ENCODE measurements at regions of chr3 and their contacts with region 1.

Region 1: GRCh38 chr3:9142362-9142761 is 107.1 kb downstream of the SRGAP3 start:
- DNase-seq: peak; percentile 32 to 50
- ATAC-seq: peak; percentile 96 to 99
- H3K4me3 ChIP-seq: no peak overlapping the region
- H3K27ac ChIP-seq: peak overlapping the region; percentile 17 to 54 (median 39)
- H3K4me1 ChIP-seq: peaks cover 22% of the 10 kb centered on the region in 2 donors
- H3K27me3 ChIP-seq: no peaks in the 10 kb centered on the region
- CTCF ChIP-seq: no peak
- POLR2A ChIP-seq: no peak

Region 2: DNA sequence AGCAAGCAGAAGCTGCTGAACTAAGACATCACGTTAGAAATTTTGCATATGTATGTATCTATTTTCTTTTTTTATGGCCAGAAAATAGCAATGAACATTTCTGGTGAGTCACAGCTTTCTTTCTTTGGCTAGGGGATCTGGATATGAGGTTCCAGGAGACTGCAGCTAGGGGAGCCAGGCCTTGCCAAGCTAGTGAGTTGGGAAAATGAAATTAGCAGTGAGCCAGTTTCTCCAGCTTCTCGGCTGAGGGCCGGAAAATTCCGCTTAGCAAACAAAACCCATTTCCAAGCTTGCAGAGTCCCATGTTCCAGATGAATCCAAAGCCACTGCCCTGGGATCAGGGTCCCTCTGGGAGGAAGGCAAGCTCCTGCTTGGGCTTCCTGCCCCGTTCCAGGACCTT is 30.5 kb before region 1 on chr3:
- in situ Hi-C with region 1: no loop called
- intact Hi-C with region 1: no loop called
- DNase-seq: peak; percentile 37 to 45
- ATAC-seq: peak; percentile 64 to 76
- H3K4me3 ChIP-seq: no peak overlapping the region
- H3K27ac ChIP-seq: no peak overlapping the region
- H3K4me1 ChIP-seq: peaks cover 4 to 7% of the 10 kb centered on the region in 2 donors
- H3K27me3 ChIP-seq: no peaks in the 10 kb centered on the region
- CTCF ChIP-seq: peak in 1 of 5 experiments; percentile 26
- POLR2A ChIP-seq: no peak

Region 3: DNA sequence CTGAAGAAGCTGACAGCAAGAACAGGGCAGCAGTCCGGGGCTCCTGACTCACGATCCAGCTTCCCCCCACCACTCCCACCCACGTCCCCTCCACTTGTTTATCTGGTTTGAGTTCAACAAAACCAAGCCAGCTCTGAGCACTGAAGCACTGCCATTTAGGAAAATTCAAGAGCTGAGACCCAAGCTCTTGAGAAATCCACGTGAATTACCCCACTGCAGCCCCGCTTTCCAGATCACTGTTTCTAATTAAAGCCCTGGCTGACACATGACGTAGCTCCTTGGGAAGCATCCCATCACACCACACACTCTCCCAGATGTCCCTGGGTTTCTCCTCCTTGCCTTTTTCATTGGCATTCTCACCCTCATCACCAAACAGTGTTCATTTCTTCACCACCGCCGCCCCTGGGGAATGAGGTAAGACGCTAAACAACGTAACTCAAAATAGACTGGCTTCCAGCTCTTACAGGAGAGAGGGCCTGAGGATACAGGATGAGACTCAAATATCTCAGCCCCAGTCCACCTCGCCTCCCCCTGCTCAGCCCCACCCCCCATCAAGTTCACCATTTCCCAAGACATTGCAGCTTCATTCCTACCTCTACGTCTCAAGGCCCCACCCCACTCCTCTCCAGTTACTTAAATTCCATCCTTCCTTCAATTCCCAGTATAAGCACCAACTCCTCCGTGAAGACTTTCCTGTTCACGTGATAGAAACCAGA is 11.7 kb after region 1 on chr3:
- in situ Hi-C with region 1: no loop called
- intact Hi-C with region 1: loop called (anchors 1 kb)
- DNase-seq: peak; percentile 73 to 92
- ATAC-seq: peak; percentile 81 to 84
- H3K4me3 ChIP-seq: peak overlapping the region; percentile 12 to 42 (median 28)
- H3K27ac ChIP-seq: peak overlapping the region; percentile 81 to 87 (median 82)
- H3K4me1 ChIP-seq: peaks cover 21 to 29% of the 10 kb centered on the region in 2 donors
- H3K27me3 ChIP-seq: no peaks in the 10 kb centered on the region
- CTCF ChIP-seq: no peak
- POLR2A ChIP-seq: peak in 1 of 2 donors; percentile 8

Region 4: GRCh38 chr3:9179826-9180763 is 37.7 kb after region 1 on chr3:
- in situ Hi-C with region 1: no loop called
- intact Hi-C with region 1: loop called (anchors 5 kb)
- DNase-seq: no peak
- ATAC-seq: no peak
- H3K4me3 ChIP-seq: no peak overlapping the region
- H3K27ac ChIP-seq: no peak overlapping the region
- H3K4me1 ChIP-seq: peaks cover 10 to 25% of the 10 kb centered on the region in 2 donors
- H3K27me3 ChIP-seq: no peaks in the 10 kb centered on the region
- CTCF ChIP-seq: no peak
- POLR2A ChIP-seq: no peak

Measured in gastrocnemius medialis (tissue), 4 donors.